Dendritic cell treated with granulocyte-macrophage colony-stimulating factor and Interleukin-4, amounts not matched to agents 40 ng/mL and 50 ng/mL, for 4 days (primary cell): ENCODE measurements at regions of chr3 and their contacts with region 1.

Region 1: GRCh38 chr3:113575206-113575605 is 42.9 kb downstream of the SIDT1 start:
- H3K4me3 Mint-ChIP-seq: no peak overlapping the region
- H3K27ac Mint-ChIP-seq: no peak overlapping the region
- H3K4me1 Mint-ChIP-seq: no peaks in the 10 kb centered on the region
- H3K27me3 Mint-ChIP-seq: peaks cover 2% of the 10 kb centered on the region

Region 2: DNA sequence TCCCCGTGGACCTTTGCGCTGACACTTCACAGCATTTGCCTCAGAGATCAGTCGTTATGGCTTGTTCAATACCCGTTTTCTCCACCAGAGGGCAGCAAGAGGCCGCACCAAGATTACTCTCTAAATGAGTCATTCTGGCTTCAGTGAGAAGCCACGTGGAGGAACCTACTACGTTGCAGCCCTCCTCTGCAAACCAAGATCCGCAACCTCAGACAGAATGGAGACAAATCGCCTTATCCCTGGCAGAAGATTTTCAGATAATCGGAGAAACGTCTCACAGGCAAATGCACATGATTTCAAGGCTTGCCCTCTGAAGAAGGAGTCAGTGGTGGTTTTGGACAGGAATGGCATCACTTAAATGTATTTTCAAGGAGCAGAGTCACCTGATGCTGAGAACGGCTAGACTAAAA is 523.9 kb before region 1 on chr3:
- intact Hi-C with region 1: loop called (anchors 5 kb)
- H3K4me3 Mint-ChIP-seq: no peak overlapping the region
- H3K27ac Mint-ChIP-seq: no peak overlapping the region
- H3K4me1 Mint-ChIP-seq: peaks cover 5% of the 10 kb centered on the region
- H3K27me3 Mint-ChIP-seq: peaks cover 1% of the 10 kb centered on the region

Region 3: GRCh38 chr3:113495035-113495434 is 80.2 kb before region 1 on chr3:
- intact Hi-C with region 1: loop called (anchors 1 kb)
- H3K4me3 Mint-ChIP-seq: no peak overlapping the region
- H3K27ac Mint-ChIP-seq: no peak overlapping the region
- H3K4me1 Mint-ChIP-seq: no peaks in the 10 kb centered on the region
- H3K27me3 Mint-ChIP-seq: no peaks in the 10 kb centered on the region

Region 4: GRCh38 chr3:113514265-113514769 is 60.9 kb before region 1 on chr3:
- intact Hi-C with region 1: no loop called
- H3K4me3 Mint-ChIP-seq: no peak overlapping the region
- H3K27ac Mint-ChIP-seq: no peak overlapping the region
- H3K4me1 Mint-ChIP-seq: peaks cover 13% of the 10 kb centered on the region
- H3K27me3 Mint-ChIP-seq: peaks cover 8% of the 10 kb centered on the region

Region 5: DNA sequence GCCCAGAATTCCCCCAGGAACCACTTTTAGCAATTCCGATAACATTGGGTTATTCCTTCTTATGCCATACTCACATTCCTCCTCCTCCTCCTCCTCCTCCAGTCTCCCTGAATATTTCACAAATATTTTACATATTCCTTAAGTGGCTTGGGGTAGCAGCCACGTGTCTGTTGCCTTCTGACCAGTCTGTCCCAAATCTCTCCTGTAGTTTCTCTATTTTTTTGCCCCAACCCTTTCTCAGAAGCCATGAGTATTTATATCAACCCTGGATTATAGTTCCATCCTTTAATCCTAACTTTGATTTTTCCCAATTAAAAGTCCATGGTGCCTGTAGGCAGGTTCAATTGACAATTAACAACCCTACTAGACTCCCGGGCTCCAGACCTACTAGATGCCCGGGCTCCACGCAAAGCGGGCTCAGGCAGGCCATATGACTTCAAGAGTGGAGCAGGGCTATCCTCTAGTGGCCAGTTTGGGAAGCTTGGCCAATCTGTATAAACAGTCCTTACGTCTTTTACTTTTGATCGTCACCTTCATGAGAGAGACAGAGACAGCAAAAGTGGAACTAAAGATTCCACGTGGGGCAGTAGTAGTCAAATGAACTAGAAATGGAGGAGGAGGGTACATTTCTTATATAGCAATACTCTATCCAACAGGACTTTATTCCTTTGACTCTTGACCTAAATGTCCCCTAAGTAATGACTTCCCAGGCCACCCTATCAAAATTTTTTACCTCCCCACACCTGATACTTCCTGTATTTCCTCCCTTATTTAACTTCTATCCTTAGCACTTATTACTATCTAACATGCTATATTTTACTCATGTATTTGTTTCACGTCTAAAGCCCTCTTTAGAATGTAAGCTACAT is 51.5 kb after region 1 on chr3:
- intact Hi-C with region 1: loop called (anchors 2 kb)
- H3K4me3 Mint-ChIP-seq: peak overlapping the region; percentile 74
- H3K27ac Mint-ChIP-seq: peak overlapping the region; percentile 81
- H3K4me1 Mint-ChIP-seq: peaks cover 33% of the 10 kb centered on the region
- H3K27me3 Mint-ChIP-seq: no peaks in the 10 kb centered on the region

Region 6: DNA sequence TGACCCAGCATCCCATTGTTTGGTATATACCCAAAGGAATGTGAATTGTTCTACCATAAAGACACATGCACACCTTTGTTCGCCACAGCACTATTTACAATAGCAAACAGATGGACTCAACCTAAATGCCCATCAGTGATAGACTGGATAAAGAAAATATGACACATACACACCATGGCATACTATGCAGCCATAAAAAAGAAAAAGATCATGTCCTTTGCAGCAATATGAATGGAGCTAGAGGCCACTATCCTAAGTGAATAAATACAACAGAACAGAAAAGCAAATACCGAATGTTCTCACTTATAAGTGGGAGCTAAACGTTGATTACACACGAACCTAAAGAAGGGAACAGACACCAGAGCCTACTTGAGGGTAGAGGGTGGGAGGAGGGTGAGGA is 132.6 kb after region 1 on chr3:
- intact Hi-C with region 1: no loop called
- H3K4me3 Mint-ChIP-seq: no peak overlapping the region
- H3K27ac Mint-ChIP-seq: no peak overlapping the region
- H3K4me1 Mint-ChIP-seq: no peaks in the 10 kb centered on the region
- H3K27me3 Mint-ChIP-seq: peaks cover 6% of the 10 kb centered on the region